ENCODE measurements at regions of chr9 and their contacts with region 1.

Region 1: GRCh38 chr9:133133681-133134418 is 12.8 kb upstream of the RALGDS start:
- DNase-seq: peak; percentile 59
- ATAC-seq: peak; percentile 79
- H3K4me3 Mint-ChIP-seq: peak overlapping the region; percentile 33
- H3K27ac Mint-ChIP-seq: peak overlapping the region; percentile 98
- H3K4me1 Mint-ChIP-seq: peaks cover 58% of the 10 kb centered on the region
- H3K27me3 Mint-ChIP-seq: no peaks in the 10 kb centered on the region
- CTCF ChIP-seq: no peak

Region 2: GRCh38 chr9:133115448-133116345 is 18.2 kb before region 1 on chr9:
- CTCF ChIA-PET with region 1: interaction called, 3 read pairs
- POLR2A ChIA-PET with region 1: interaction called, 12 read pairs
- intact Hi-C with region 1: loop called (anchors 2 kb)
- DNase-seq: no peak
- ATAC-seq: peak; percentile 80
- H3K4me3 Mint-ChIP-seq: peak overlapping the region; percentile 61
- H3K27ac Mint-ChIP-seq: peak overlapping the region; percentile 83
- H3K4me1 Mint-ChIP-seq: peaks cover 75% of the 10 kb centered on the region
- H3K27me3 Mint-ChIP-seq: no peaks in the 10 kb centered on the region
- CTCF ChIP-seq: no peak

Region 3: DNA sequence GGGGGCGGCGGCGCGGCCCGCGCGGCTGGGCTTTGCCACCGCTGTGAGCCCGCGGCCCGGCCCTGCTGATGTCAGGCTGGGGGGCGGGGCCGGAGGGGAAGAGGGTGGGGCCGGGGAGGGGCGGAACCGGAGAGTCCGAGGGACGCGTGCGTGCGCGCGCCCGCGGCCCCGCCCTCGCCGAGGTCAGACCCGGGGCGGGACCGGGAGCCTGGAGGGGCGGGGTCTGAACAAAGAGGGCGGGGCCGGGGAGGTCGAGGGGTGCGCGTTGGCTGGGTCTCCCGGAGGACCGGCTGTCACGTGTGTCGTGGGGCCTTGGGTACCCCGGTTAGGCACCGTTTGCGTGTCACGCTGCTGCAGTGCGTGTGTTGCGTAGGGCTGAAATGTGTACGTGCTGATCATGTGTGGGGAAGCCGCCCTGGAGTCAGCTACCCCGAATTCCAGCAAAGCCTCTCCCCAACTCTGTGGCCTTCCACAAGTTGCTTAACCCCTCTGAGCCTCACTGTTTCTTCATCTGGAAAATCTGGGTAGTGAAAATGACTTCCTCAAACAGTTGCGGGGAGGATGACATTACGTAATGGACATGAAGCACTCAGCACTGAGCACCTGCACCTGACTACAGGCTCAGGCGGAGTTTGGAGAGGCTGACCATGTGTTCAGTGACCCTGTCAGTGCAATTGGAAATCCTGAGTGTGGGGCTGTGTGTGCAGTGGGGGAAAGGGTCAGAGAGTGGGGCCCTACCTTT is 12.5 kb before region 1 on chr9 and contains the start of gene RALGDS:
- CTCF ChIA-PET with region 1: no interaction called
- POLR2A ChIA-PET with region 1: interaction called, 12 read pairs
- intact Hi-C with region 1: loop called (anchors 1 kb)
- DNase-seq: peak; percentile 86
- ATAC-seq: peak; percentile 81
- H3K4me3 Mint-ChIP-seq: peak within 1 kb of the TSS; percentile 82
- H3K27ac Mint-ChIP-seq: peak within 1 kb of the TSS; percentile 94
- H3K4me1 Mint-ChIP-seq: peaks cover 68% of the 10 kb centered on the region
- H3K27me3 Mint-ChIP-seq: no peaks in the 10 kb centered on the region
- CTCF ChIP-seq: no peak
- total RNA-seq, gene RALGDS: 21.2 and 29.2 TPM in 2 replicates